ENCODE measurements at regions of chr17 and their contacts with region 1.

Region 1: GRCh38 chr17:40531051-40531991 is 29.9 kb upstream of the TNS4 start:
- DNase-seq: peak; percentile 51
- CTCF ChIP-seq: no peak

Region 2: GRCh38 chr17:40317880-40318829 is 213.2 kb before region 1 on chr17:
- CTCF ChIA-PET with region 1: interaction called, 25 read pairs
- POLR2A ChIA-PET with region 1: no interaction called
- DNase-seq: peak; percentile 98
- CTCF ChIP-seq: no peak

Region 3: DNA sequence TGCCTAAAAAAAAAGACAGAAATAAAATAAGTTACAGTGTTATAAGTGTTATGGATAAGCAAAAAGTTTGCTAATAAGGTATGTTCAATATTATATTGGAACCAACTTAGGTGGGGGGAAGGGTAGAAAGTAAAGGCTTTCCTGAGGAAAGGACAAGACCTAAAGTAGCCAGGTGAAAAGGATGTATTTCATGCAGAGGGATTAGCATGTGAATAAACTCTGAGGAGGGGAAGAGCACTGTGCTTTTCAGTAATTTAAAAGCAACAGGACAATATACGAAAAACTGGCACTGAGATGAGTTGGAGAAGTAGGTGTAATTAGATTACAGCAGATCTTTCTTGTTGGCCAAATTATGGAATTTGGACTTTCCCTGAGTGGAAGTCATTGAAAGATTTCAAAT is 121.2 kb before region 1 on chr17:
- CTCF ChIA-PET with region 1: interaction called, 53 read pairs
- POLR2A ChIA-PET with region 1: no interaction called
- DNase-seq: no peak
- CTCF ChIP-seq: no peak

Region 4: GRCh38 chr17:40475234-40475908 is 56.0 kb before region 1 on chr17:
- CTCF ChIA-PET with region 1: interaction called, 24 read pairs
- POLR2A ChIA-PET with region 1: no interaction called
- DNase-seq: no peak
- CTCF ChIP-seq: no peak

Region 5: GRCh38 chr17:40518401-40519121 is 12.8 kb before region 1 on chr17:
- CTCF ChIA-PET with region 1: interaction called, 29 read pairs
- POLR2A ChIA-PET with region 1: no interaction called
- DNase-seq: no peak
- CTCF ChIP-seq: no peak

Region 6: GRCh38 chr17:40602775-40603551 is 71.6 kb after region 1 on chr17:
- CTCF ChIA-PET with region 1: no interaction called
- POLR2A ChIA-PET with region 1: no interaction called
- DNase-seq: peak; percentile 70
- CTCF ChIP-seq: no peak

Region 7: GRCh38 chr17:40727447-40728212 is 196.3 kb after region 1 on chr17:
- CTCF ChIA-PET with region 1: no interaction called
- POLR2A ChIA-PET with region 1: no interaction called
- DNase-seq: peak; percentile 47
- CTCF ChIP-seq: no peak